ENCODE measurements at regions of chr11 and their contacts with region 1.

Region 1: DNA sequence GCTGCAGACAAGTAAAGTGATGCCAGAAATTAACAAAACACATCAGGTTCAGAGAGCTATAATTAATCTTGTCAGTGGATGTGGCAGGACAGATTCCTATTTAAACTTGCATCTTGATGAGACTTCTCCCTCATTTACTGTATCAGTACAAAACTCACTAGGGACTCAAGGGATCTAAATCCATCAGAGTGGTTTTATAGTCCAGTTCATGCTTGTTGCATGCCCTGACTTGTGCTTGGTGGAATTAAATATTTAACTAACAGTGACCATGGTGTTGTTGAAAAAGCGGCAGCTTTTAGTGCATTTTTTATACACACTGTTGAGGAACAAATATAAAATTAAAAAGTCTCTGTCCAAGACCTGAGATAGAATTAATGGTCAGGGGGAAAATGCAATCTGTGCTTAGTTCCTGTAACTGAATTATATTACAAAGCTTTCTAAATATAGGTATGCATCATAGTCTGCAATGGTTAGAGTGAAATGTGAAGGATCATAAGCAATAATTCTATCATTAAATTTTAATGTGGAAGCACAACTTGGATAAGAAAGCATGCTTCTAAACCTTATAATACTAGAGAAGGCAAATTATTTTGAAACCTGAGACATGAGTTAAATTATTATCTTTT is 1475.5 kb upstream of the TENM4 start:
- DNase-seq: no peak
- H3K4me3 ChIP-seq: no peak overlapping the region
- H3K27ac ChIP-seq: no peak overlapping the region
- H3K4me1 ChIP-seq: no peaks in the 10 kb centered on the region
- H3K27me3 ChIP-seq: no peaks in the 10 kb centered on the region
- CTCF ChIP-seq: no peak
- EP300 ChIP-seq: no peak
- POLR2A ChIP-seq: no peak

Region 2: DNA sequence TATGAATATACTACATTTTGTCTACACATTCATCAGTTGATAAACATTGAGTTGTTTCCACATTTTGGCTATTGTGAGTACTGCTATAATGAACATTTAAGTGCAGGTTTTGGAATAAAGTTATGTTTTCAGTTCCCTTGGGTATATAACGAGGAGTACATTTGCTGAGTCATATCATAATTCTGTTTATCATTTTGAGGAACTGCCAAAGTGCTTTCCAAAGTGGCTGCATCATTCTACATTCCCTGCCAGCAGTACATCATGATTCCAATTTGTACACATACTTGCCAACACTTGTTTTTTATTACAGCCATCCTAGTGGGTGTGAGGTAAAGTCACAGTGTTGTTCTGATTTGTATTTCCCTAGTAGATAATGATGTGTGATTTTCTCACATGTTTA is 16.9 kb before region 1 on chr11:
- intact Hi-C with region 1: loop called in 1 of 4 experiments (anchors 1 kb)
- DNase-seq: no peak
- H3K4me3 ChIP-seq: no peak overlapping the region
- H3K27ac ChIP-seq: no peak overlapping the region
- H3K4me1 ChIP-seq: no peaks in the 10 kb centered on the region
- H3K27me3 ChIP-seq: no peaks in the 10 kb centered on the region
- CTCF ChIP-seq: no peak
- EP300 ChIP-seq: no peak
- POLR2A ChIP-seq: no peak

Measured in ovary (tissue), 10 donors.